ENCODE measurements at regions of chr10 and their contacts with region 1.

Region 1: GRCh38 chr10:110739811-110740271 is 95.7 kb downstream of the RBM20 start:
- DNase-seq: peak in 1 of 9 experiments; percentile 24
- ATAC-seq: peak; percentile 26
- H3K4me3 ChIP-seq: no peak overlapping the region
- H3K4me3 Mint-ChIP-seq: no peak overlapping the region
- H3K27ac ChIP-seq: no peak overlapping the region
- H3K27ac Mint-ChIP-seq: no peak overlapping the region
- H3K4me1 ChIP-seq: no peaks in the 10 kb centered on the region
- H3K4me1 Mint-ChIP-seq: peaks cover 33% of the 10 kb centered on the region
- H3K27me3 ChIP-seq: peaks cover 0 to 3% of the 10 kb centered on the region in 2 experiments
- H3K27me3 Mint-ChIP-seq: peaks cover 6% of the 10 kb centered on the region
- CTCF ChIP-seq: no peak

Region 2: DNA sequence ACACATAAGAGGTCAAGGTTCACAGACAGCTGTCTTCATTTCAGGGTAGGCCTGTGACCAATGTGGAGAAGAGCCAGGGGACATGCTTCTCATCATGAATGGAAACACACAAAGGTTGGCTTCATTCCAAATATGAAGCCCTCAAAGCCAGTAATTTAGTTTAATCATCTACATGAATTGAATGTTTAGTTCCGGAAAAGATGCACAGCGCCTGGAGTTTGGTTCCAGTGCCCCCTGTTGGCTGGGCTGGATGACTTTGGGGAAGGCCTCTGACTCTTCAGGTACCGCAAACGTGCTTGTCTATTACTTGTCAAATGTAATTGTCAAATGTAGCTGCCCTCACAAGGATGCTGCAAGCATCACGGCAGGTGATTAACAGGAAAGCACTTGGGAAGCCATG is 467.7 kb after region 1 on chr10:
- CTCF ChIA-PET with region 1: no interaction called
- POLR2A ChIA-PET with region 1: no interaction called
- intact Hi-C with region 1: loop called in 1 of 2 experiments (anchors 5 kb)
- DNase-seq: peak in 4 of 9 experiments; percentile 16 to 31 (median 22)
- ATAC-seq: no peak
- H3K4me3 ChIP-seq: no peak overlapping the region
- H3K4me3 Mint-ChIP-seq: no peak overlapping the region
- H3K27ac ChIP-seq: no peak overlapping the region
- H3K27ac Mint-ChIP-seq: no peak overlapping the region
- H3K4me1 ChIP-seq: no peaks in the 10 kb centered on the region
- H3K4me1 Mint-ChIP-seq: no peaks in the 10 kb centered on the region
- H3K27me3 ChIP-seq: no peaks in the 10 kb centered on the region
- H3K27me3 Mint-ChIP-seq: peaks cover 3% of the 10 kb centered on the region
- CTCF ChIP-seq: no peak